ENCODE measurements at regions of chr17 and their contacts with region 1.

Region 1: DNA sequence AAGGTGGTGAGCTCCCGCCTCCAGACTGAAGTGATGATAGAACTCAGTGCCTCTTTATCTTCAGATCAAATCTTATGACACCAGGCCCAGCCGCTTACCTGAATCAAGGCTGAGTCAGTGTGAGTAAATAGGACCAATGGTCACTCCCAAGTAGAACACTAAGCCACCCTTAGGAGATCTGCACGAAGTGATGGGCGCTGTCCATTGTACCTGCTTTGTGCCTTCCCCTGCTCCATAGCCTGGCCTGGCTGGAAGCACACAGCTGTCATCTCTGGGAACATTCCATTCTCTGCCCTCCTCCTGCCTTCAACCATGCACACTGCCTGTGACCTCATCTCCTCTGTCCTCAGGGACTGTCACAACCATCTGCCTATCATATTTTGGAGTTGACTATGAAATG is 279.5 kb upstream of the ASIC2 start:
- DNase-seq: no peak
- H3K4me3 ChIP-seq: no peak overlapping the region
- H3K27ac ChIP-seq: no peak overlapping the region
- H3K4me1 ChIP-seq: no peaks in the 10 kb centered on the region
- H3K27me3 ChIP-seq: no peaks in the 10 kb centered on the region
- CTCF ChIP-seq: no peak

Region 2: DNA sequence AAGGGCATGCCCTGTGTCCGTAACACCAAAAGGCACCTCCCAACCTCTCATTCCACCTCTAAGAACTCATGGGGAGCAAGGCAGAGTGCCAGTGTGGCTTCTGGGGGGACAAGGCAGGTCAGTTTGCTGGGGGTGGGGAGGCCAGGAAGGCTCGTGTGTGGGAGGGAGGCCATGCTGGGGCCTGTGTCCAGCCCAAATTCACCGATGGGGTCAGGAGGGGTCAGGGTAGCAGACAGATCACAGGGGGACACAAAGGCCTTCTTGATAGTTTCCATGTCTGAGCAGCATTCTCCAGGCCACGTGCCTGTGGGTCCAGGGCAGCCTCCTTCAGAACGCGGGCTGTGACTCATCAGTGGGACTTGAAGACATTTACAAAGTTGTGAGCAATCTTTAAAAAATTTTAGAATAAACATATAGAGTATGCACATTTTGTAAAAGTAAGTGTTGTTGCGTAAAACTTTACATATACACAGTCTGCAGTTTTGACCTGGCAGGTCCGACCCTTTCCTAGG is 560.0 kb before region 1 on chr17:
- intact Hi-C with region 1: loop called (anchors 10 kb)
- DNase-seq: no peak
- H3K4me3 ChIP-seq: no peak overlapping the region
- H3K27ac ChIP-seq: no peak overlapping the region
- H3K4me1 ChIP-seq: peaks cover 0 to 11% (median 3%) of the 10 kb centered on the region in 4 donors
- H3K27me3 ChIP-seq: no peaks in the 10 kb centered on the region
- CTCF ChIP-seq: no peak

Region 3: DNA sequence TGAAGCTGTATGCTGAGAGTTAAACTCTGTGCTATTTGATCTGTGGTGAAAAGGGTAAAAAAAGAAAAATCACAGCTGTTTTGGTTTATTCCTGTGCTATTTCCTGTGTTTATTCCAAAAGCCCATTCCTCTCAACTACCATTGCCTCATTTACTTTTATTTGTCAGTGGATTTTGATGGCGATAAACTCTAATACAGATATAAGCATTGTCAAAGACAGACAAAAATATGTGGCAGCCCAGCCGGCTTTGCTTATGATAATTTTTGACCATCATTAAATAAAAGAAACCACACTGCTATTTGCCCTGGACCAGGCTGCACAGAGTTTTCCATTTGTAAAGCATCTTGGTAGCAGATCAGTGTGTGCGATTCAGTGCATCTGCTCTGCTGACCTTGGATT is 194.1 kb after region 1 on chr17:
- intact Hi-C with region 1: no loop called
- DNase-seq: no peak
- H3K4me3 ChIP-seq: no peak overlapping the region
- H3K27ac ChIP-seq: no peak overlapping the region
- H3K4me1 ChIP-seq: no peaks in the 10 kb centered on the region
- H3K27me3 ChIP-seq: no peaks in the 10 kb centered on the region
- CTCF ChIP-seq: no peak

Measured in tibial artery (tissue), 4 donors.